Posterior vena cava (tissue), 2 donors: ENCODE measurements at regions of chr1 and their contacts with region 1.

Region 1: DNA sequence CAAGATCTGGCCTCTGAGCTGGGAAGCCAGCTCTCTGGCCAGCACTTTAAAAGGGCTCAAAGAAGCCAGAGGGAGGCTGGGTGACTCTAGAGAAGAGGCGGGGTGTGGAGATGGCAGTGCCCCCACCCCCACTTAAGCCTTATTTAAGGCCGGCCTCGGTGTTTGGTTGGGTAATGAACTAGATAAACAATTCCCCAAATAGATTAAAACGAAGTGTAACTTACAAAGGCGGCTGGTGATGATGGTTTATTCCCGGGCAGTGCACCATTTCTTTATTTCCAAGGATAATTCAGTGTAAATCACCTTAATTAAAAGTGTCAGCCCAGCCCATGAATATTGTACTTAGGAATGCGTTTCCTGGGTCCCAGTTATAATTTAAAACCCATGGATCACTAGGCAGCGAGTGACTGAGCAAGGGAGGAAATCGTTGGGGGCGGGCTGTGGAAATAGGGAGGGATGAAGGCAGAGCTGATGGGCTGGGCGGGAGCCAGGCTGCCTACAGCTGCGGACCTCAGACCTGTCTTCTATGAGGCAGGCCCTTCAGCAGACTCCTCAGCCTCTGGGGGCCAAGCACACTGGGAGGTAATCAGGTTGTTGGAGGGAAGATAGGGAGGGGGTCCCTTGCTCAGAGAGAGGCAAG is 54.9 kb downstream of the TMEM53 start:
- DNase-seq: no peak

Region 2: GRCh38 chr1:44645476-44646244 is 26.3 kb after region 1 on chr1:
- intact Hi-C with region 1: loop called in 1 of 2 experiments (anchors 2 kb)
- DNase-seq: peak; percentile 87

Region 3: GRCh38 chr1:45604239-45604638 is 984.9 kb after region 1 on chr1:
- intact Hi-C with region 1: no loop called
- DNase-seq: no peak